HAP-1 (cell line): ENCODE measurements at regions of chr9 and their contacts with region 1.

Region 1: DNA sequence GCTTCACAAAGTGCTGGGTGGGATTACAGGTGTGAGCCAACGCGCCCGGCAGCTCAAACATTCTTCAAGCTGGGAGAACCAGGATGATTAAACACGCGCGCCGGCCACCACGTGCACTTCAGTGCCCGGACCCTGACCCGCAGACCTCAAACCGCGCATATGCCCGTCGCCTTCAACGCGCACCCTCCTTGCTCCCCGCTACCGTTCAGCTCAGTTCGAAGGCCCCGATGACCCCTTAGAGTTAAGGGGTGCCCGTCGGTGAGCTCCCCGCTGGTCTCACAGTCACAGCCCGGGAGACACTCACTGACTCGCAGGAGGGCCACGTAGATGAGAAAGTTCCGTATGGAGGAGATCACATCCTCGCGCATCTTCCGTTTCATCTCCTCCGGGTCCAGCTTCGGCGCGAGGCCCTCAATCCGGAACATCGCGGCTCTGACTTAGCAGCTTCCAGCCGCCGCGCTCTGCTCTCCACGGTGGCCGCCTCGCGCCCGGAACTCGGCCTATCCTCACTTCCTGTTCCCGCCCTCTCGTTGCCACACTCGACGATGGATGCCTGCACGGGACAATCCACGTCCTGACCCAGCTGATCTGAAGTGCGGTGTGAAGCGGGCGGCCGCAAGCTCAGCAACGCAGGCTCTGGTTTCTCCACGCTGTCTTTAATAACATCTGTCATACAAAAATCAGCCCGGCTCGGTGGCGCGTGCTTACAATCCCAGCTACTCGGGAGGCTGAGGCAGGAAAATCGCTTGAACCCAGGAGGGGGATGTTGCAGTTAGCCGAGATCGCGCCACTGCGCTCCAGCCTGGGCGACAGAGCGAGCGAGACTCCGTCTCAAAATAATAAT is at the start of gene TOMM5:
- DNase-seq: peak; percentile 76 to 94
- H3K4me3 ChIP-seq: peak within 1 kb of the TSS; percentile 83
- H3K4me1 ChIP-seq: peaks cover 12% of the 10 kb centered on the region
- H3K27me3 ChIP-seq: peaks cover 6% of the 10 kb centered on the region; the same call in 1 of the 2 replicates

Region 2: DNA sequence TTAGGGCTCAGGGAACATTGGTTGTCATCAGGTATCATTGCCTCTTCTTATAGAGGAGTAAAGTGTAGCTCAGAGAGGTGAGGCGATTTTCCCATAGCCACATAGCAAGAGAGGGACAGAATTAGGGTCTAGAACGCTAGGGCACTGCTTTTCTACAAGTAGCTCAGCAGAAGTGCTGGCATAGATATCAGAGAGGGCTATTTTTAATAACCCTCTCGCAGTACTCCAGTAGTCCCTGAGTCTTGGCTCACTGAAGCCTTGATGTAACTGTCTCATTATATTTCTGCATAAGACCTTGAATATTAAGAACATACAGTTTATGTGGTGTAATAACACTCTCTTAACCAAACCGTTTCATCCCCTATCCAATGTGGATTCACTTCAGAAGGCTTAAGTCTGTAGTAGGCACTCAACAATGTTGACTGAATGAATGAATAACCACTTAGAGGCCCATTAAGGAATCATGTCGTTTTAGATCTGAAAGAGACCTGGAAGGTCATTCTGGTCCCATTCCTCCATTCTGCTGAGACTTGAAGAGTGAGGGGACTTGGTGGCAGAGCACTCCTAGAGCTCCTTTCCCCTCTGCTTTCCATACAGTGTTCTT is 53.7 kb after region 1 on chr9:
- in situ Hi-C with region 1: loop called (anchors 10 kb)
- DNase-seq: no peak
- H3K4me3 ChIP-seq: no peak overlapping the region
- H3K4me1 ChIP-seq: peaks cover 8% of the 10 kb centered on the region
- H3K27me3 ChIP-seq: peaks cover 15% of the 10 kb centered on the region

Region 3: DNA sequence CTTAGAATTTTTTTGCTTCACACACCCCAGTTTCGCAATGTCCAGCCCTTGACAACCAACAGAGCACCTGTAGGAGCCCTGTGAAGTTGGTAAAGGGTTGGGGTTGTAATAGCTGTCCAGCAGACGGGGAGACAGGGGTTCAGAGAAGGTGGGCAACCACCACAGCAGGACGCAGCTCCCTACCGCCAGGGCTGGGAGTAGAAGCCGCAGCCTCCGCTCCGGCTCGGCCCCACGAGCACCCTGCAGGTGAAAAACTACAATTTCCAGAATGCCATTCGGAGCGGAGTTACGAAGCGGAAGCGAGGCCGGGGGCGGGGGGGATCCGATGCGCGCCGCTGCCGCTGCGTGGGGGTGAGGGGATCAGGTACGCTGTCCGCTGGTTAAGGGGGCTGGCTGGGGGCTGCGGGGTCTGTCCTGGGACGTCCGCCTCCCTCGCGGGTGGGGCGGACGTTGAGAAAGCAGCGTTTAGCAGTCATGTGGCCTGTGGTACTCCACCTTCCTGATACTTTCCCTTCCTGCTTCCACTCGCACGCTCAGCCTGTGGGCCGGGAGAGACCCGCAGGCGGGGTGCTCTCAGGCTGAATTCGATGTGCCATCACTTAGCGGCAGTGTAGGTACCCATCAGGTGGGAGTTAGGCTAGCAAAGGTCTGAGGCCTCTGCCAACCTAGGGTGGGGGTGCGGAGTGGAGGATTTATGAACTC is 161.3 kb after region 1 on chr9 and contains the start of gene TRMT10B:
- in situ Hi-C with region 1: loop called (anchors 10 kb)
- DNase-seq: peak; percentile 60 to 81
- H3K4me3 ChIP-seq: peak within 1 kb of the TSS; percentile 71
- H3K4me1 ChIP-seq: peaks cover 7% of the 10 kb centered on the region; the same call in 1 of the 2 replicates
- H3K27me3 ChIP-seq: no peaks in the 10 kb centered on the region